Testis (tissue), 5 donors: ENCODE measurements at regions of chr1 and their contacts with region 1.

Region 1: DNA sequence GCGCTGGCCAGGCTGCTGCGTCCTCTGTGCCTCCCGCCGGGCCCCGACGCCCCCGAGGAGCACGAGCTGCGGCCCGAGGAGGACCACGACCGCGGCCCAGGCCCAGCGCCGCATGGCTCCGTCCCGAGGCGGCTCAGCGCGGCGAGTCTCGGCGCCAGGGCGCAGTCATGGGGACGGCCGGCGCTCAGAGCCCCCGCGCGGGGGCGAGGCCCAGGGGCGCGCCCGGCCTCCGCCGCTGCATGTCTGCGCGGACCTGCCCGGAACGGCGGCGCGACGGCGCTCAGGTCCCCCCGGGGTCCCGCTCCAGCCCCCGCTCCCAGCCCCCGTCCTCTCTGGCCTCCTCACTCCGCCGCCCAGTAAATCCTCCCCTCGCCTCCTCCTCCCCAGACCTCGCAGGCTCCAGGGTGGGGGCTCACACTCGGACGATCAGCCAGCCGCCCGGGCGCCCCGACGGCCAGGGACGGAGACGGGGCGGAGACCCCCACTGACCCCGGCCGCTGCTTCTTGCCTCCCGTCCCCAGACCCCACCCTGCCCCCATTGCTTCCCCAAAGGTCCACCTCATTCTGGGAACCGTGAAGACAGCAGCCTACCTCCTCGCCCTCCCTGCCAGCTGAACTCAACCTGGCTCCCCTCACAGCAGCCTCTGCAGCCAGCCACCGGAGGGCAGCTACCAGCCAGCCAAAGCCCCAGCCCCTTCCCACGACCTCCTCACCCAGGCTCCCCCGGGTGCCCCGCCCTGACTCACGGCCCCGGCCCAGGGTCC is at the start of gene C1QTNF12:
- DNase-seq: no peak
- H3K4me3 ChIP-seq: no peak within 1 kb of the TSS
- H3K27ac ChIP-seq: no peak within 1 kb of the TSS
- H3K4me1 ChIP-seq: peaks cover 8% of the 10 kb centered on the region
- H3K27me3 ChIP-seq: no peaks in the 10 kb centered on the region
- CTCF ChIP-seq: no peak
- POLR2A ChIP-seq: no peak
- total RNA-seq, gene C1QTNF12: 4.7 to 7.7 TPM

Region 2: GRCh38 chr1:1122078-1122811 is 124.5 kb before region 1 on chr1:
- intact Hi-C with region 1: loop called (anchors 10 kb)
- DNase-seq: peak; percentile 78
- H3K4me3 ChIP-seq: no peak overlapping the region
- H3K27ac ChIP-seq: no peak overlapping the region
- H3K4me1 ChIP-seq: no peaks in the 10 kb centered on the region
- H3K27me3 ChIP-seq: no peaks in the 10 kb centered on the region
- CTCF ChIP-seq: peak; percentile 74 to 80 (median 80)
- POLR2A ChIP-seq: no peak

Region 3: GRCh38 chr1:1157033-1157365 is 89.8 kb before region 1 on chr1:
- intact Hi-C with region 1: no loop called
- DNase-seq: no peak
- H3K4me3 ChIP-seq: peak overlapping the region in 1 of 2 donors; percentile 71
- H3K27ac ChIP-seq: no peak overlapping the region
- H3K4me1 ChIP-seq: peaks cover 8% of the 10 kb centered on the region
- H3K27me3 ChIP-seq: no peaks in the 10 kb centered on the region
- CTCF ChIP-seq: no peak
- POLR2A ChIP-seq: no peak